ENCODE measurements at regions of chr21 and their contacts with region 1.

Region 1: GRCh38 chr21:14630556-14631069 is 84.5 kb upstream of the SAMSN1 start:
- DNase-seq: no peak
- H3K4me3 ChIP-seq: no peak overlapping the region
- H3K27ac ChIP-seq: no peak overlapping the region
- H3K4me1 ChIP-seq: no peaks in the 10 kb centered on the region
- H3K27me3 ChIP-seq: no peaks in the 10 kb centered on the region
- CTCF ChIP-seq: no peak
- EP300 ChIP-seq: no peak
- POLR2A ChIP-seq: no peak

Region 2: GRCh38 chr21:14690886-14691285 is 60.3 kb after region 1 on chr21:
- in situ Hi-C with region 1: loop called in 1 of 4 experiments (anchors 10 kb)
- intact Hi-C with region 1: no loop called
- DNase-seq: no peak
- H3K4me3 ChIP-seq: no peak overlapping the region
- H3K27ac ChIP-seq: no peak overlapping the region
- H3K4me1 ChIP-seq: no peaks in the 10 kb centered on the region
- H3K27me3 ChIP-seq: no peaks in the 10 kb centered on the region
- CTCF ChIP-seq: no peak
- EP300 ChIP-seq: no peak
- POLR2A ChIP-seq: no peak

Region 3: GRCh38 chr21:15293240-15293639 is 662.6 kb after region 1 on chr21:
- in situ Hi-C with region 1: no loop called
- intact Hi-C with region 1: no loop called
- DNase-seq: no peak
- H3K4me3 ChIP-seq: no peak overlapping the region
- H3K27ac ChIP-seq: no peak overlapping the region
- H3K4me1 ChIP-seq: peaks cover 0 to 31% (median 3%) of the 10 kb centered on the region in 4 donors
- H3K27me3 ChIP-seq: no peaks in the 10 kb centered on the region
- CTCF ChIP-seq: no peak
- EP300 ChIP-seq: no peak
- POLR2A ChIP-seq: no peak

Measured in transverse colon (tissue), 4 donors.